Posterior vena cava (tissue), 2 donors: ENCODE measurements at regions of chr15 and their contacts with region 1.

Region 1: GRCh38 chr15:59274126-59274970 is 67.7 kb downstream of the LDHAL6B start:
- DNase-seq: no peak

Region 2: GRCh38 chr15:59224474-59224873 is 49.9 kb before region 1 on chr15:
- intact Hi-C with region 1: no loop called
- DNase-seq: no peak

Region 3: GRCh38 chr15:59678620-59679019 is 404.3 kb after region 1 on chr15:
- intact Hi-C with region 1: loop called in 1 of 2 experiments (anchors 10 kb)
- DNase-seq: no peak